Left cardiac atrium (tissue), 4 donors: ENCODE measurements at regions of chr12 and their contacts with region 1.

Region 1: DNA sequence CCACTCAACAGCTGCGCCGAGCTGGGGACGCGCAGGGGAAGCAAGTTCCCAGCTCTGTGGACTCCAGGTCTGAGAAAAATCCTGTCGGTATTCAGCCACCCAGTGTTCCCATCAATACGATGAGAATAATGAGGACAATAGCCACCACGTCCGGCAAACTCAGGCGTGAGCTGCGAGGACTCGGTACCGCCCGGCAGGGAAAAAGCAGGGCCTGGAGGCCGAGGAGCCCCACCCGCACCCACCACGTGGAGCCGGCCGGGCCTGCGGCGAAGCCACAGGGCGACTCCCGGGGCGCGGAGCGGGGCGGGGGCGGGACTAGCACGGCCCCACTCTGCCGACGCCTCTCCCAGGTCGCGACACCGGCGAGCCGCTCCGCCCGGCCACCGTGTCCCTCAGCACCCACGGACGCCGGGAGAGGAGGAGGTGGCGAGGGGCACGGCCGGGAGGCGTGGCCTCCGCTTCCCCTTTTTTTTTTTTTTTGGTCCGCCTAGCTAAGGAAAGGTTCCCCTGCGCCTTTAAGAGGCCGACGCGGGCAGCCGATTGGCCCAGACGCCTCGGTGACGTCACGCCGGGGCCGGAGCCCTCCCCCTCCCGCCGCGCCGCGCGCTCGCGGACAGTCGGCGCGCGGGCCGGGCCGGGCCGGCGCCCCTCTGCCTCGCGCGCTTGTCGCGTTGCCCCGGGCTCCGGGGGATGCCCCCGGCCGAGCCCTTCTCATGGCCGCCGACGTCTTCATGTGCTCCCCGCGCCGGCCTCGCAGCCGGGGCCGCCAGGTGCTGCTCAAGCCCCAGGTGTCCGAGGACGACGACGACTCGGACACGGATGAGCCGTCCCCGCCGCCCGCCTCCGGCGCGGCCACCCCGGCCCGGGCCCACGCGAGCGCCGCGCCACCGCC is at the start of gene MLXIP:
- DNase-seq: peak; percentile 95
- ATAC-seq: peak; percentile 88 to 94
- total RNA-seq, gene MLXIP: 30.8 to 31.3 TPM

Region 2: GRCh38 chr12:121325922-121326396 is 752.4 kb before region 1 on chr12:
- intact Hi-C with region 1: no loop called
- DNase-seq: no peak
- ATAC-seq: no peak

Region 3: DNA sequence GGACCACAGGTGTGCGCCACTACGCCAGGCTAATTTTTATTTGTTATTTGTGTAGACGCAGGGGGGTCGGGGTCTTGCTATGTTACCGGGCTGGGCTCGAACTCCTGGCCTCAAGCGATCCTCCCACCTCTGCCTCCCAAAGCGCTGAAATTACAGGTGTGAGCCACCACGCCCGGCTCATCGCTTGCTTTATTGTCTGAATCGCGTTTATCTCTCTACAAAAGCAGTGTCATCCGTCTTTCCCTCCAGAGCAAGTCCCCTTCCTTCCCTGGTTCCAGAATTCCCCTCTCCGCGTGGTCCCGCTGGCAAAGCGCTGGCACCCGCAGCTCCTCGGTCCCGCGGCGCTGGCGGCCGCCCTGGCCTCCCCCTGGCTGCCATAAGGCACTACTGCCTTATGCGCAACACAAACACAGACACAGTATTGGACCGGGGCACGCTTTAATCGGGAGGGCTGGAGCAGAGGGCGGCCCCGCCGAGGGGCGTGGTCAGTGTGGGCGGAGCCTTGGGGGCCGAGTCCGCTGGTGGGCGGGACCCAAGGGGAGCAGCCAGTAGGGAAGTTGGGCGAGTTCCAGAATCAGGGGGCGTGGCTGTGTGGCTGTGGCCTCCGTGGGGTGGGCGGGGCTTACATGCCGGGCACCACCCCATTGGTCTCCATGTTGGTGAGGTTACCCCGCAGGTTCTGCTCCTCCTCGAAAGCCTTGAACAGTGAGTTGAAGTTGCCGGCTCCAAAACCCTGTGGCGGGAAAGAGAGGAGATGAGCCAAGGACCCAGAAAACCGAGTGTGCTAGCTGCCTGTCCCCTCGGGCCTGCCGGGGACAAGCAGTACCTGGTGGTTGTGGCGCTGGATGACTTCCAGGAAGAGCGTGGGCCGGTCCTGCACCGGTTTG is 239.0 kb before region 1 on chr12:
- intact Hi-C with region 1: no loop called
- DNase-seq: peak; percentile 100
- ATAC-seq: peak; percentile 99

Region 4: GRCh38 chr12:122021822-122022526 is 56.4 kb before region 1 on chr12 and contains the start of gene BCL7A:
- intact Hi-C with region 1: loop called in 1 of 2 experiments (anchors 2 kb)
- DNase-seq: peak; percentile 70
- ATAC-seq: peak; percentile 76 to 77
- total RNA-seq, gene BCL7A: 9.8 to 11.3 TPM